RWPE1 (cell line): ENCODE measurements at regions of chr19 and their contacts with region 1.

Region 1: GRCh38 chr19:8444645-8445487 is at the start of gene HNRNPM:
- DNase-seq: peak; percentile 97
- H3K27ac ChIP-seq: peak within 1 kb of the TSS; percentile 83
- CTCF ChIP-seq: no peak

Region 2: GRCh38 chr19:8430650-8431049 is 14.2 kb before region 1 on chr19:
- CTCF ChIA-PET with region 1: no interaction called
- POLR2A ChIA-PET with region 1: no interaction called
- DNase-seq: no peak
- H3K27ac ChIP-seq: no peak overlapping the region
- CTCF ChIP-seq: no peak

Region 3: DNA sequence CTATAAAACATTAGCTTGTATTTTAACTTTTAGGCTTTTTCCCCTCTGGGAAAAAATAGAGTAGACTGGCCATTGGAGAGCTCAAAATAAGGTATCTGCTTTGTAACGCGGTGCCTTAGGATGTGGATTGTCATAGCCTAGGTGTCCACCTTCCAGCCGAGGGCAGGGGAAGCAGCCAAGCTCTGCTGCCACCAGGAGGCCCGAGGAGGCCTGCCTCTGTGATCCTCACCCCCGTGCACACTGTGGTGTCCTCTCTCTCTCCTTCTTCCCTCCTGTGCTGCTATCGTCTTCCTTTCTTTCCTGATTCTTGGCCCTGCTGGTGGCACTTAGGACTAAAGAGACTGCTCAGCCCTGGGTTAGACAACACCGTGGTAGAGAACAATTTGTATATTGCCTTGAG is 11.2 kb after region 1 on chr19:
- CTCF ChIA-PET with region 1: interaction called, 3 read pairs
- POLR2A ChIA-PET with region 1: interaction called, 11 read pairs
- DNase-seq: no peak
- H3K27ac ChIP-seq: no peak overlapping the region
- CTCF ChIP-seq: no peak